A673 (cell line): ENCODE measurements at regions of chr7 and their contacts with region 1.

Region 1: DNA sequence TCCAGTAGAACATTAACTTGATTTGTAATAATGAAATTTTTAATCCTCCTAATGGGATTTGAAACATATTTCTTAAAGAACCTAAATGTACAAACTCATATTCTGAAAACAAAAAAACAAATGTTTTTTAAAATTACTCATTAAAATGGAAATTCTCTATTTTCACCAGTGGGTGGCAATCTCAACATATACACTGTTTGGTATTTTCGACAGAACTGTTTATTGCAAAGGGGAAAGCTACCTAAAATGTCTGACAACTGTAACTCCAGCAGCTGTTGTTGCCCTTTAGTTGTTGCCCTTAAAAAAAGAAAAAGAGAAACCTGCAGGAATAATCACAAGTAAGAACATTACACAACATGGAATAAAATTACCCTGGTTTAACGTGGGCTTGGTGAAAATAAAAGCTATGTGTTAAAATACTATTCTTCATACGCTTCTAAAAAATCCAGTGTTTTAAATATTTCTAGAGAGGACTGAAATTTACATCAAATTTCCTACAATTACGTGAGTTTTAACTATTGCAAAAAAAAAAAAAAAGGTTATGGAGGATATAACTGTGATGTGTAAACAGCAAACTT is 54.5 kb downstream of the COL1A2 start:
- DNase-seq: peak; percentile 71
- H3K4me3 ChIP-seq: no peak overlapping the region
- H3K27ac ChIP-seq: no peak overlapping the region
- H3K4me1 ChIP-seq: peaks cover 15% of the 10 kb centered on the region
- H3K27me3 ChIP-seq: no peaks in the 10 kb centered on the region
- CTCF ChIP-seq: peak; percentile 75

Region 2: DNA sequence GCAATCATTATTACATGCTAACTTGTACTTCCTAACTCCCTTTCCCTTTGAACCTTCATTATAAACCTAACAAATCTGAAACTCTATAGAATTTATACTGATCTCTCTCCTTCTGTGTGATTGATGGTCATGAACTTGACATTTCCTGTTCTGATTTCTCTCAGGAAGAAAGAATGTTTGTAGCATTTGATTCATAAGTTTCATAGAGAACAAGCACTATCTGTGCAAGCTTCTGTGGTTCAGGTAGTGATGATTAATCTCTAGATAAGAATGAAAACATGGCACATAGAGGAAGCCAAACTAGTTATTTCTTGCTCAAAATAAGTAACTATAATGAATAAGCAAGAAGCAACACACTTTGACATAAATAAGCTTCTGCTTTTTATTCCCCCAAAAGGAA is 592.9 kb before region 1 on chr7:
- CTCF ChIA-PET with region 1: no interaction called
- POLR2A ChIA-PET with region 1: no interaction called
- intact Hi-C with region 1: no loop called
- DNase-seq: no peak
- H3K4me3 ChIP-seq: no peak overlapping the region
- H3K27ac ChIP-seq: no peak overlapping the region
- H3K4me1 ChIP-seq: peaks cover 9% of the 10 kb centered on the region
- H3K27me3 ChIP-seq: peaks cover 3% of the 10 kb centered on the region
- CTCF ChIP-seq: no peak

Region 3: GRCh38 chr7:94382132-94382531 is 67.1 kb before region 1 on chr7:
- CTCF ChIA-PET with region 1: no interaction called
- POLR2A ChIA-PET with region 1: no interaction called
- intact Hi-C with region 1: no loop called
- DNase-seq: no peak
- H3K4me3 ChIP-seq: no peak overlapping the region
- H3K27ac ChIP-seq: no peak overlapping the region
- H3K4me1 ChIP-seq: peaks cover 11% of the 10 kb centered on the region
- H3K27me3 ChIP-seq: no peaks in the 10 kb centered on the region
- CTCF ChIP-seq: no peak

Region 4: GRCh38 chr7:94907026-94907810 is 458.0 kb after region 1 on chr7 and contains the start of gene PPP1R9A:
- CTCF ChIA-PET with region 1: no interaction called
- POLR2A ChIA-PET with region 1: no interaction called
- intact Hi-C with region 1: loop called (anchors 10 kb)
- DNase-seq: peak; percentile 63
- H3K4me3 ChIP-seq: peak within 1 kb of the TSS; percentile 66
- H3K27ac ChIP-seq: peak within 1 kb of the TSS; percentile 75
- H3K4me1 ChIP-seq: peaks cover 9% of the 10 kb centered on the region
- H3K27me3 ChIP-seq: no peaks in the 10 kb centered on the region
- CTCF ChIP-seq: peak; percentile 39
- total RNA-seq, gene PPP1R9A: 13.3 and 15.6 TPM in 2 replicates

Region 5: GRCh38 chr7:95045236-95045923 is 596.1 kb after region 1 on chr7:
- CTCF ChIA-PET with region 1: interaction called, 4 read pairs
- POLR2A ChIA-PET with region 1: no interaction called
- intact Hi-C with region 1: loop called (anchors 2 kb)
- DNase-seq: peak; percentile 72
- H3K4me3 ChIP-seq: no peak overlapping the region
- H3K27ac ChIP-seq: no peak overlapping the region
- H3K4me1 ChIP-seq: peaks cover 18% of the 10 kb centered on the region
- H3K27me3 ChIP-seq: no peaks in the 10 kb centered on the region
- CTCF ChIP-seq: peak; percentile 65

Region 6: GRCh38 chr7:95199779-95200558 is 750.7 kb after region 1 on chr7:
- CTCF ChIA-PET with region 1: no interaction called
- POLR2A ChIA-PET with region 1: interaction called, 3 read pairs
- intact Hi-C with region 1: loop called (anchors 2 kb)
- DNase-seq: peak; percentile 71
- H3K4me3 ChIP-seq: no peak overlapping the region
- H3K27ac ChIP-seq: no peak overlapping the region
- H3K4me1 ChIP-seq: no peaks in the 10 kb centered on the region
- H3K27me3 ChIP-seq: no peaks in the 10 kb centered on the region
- CTCF ChIP-seq: peak; percentile 80

Region 7: DNA sequence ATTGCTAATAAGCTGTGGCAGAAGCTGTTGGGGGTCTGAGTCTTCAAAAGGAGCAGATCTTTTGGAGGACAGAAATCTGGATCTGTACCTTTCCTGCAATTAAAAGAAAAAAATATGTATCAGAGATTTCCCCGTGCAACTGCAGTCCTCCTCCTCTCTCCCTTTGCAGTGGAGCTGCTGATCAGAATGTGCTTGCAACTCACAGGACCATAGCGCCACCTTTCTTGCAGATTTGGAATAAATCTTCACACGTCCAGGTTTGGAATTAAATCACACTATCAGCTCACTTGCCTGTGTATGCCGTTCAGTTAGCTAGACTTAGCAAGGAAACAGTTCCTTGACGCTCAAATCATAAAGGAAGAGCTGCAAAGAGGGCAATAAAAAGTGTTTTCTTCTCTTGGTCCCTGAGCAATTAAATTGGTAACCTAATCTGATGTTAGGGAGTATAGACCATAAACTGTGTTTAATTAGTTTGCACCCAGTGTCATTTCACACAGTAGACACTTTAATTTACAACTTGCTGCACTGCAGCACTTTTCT is 797.7 kb after region 1 on chr7:
- CTCF ChIA-PET with region 1: interaction called, 9 read pairs
- POLR2A ChIA-PET with region 1: no interaction called
- intact Hi-C with region 1: loop called (anchors 5 kb)
- DNase-seq: peak; percentile 87
- H3K4me3 ChIP-seq: no peak overlapping the region
- H3K27ac ChIP-seq: no peak overlapping the region
- H3K4me1 ChIP-seq: peaks cover 5% of the 10 kb centered on the region
- H3K27me3 ChIP-seq: no peaks in the 10 kb centered on the region
- CTCF ChIP-seq: peak; percentile 89